ENCODE measurements at regions of chr1 and their contacts with region 1.

Region 1: DNA sequence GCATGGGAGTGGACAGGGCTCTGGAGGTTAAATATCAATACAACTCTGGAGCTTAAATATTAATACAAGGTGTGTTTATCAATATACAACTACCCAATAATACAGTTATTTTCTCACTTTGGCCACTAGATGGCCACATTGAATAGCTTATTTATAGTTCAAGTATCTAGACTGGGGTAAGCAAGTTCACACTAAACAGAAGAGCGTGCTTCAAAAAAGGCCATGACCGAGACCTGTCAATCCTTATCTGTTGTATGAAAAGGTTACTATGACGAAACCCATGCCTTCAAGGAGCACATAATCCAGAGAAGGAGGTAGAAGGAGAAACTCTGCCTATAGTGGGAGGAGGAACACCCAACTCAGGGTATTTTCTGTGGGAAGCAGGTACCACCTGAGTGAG is 29.1 kb downstream of the CHML start:
- DNase-seq: peak; percentile 92
- H3K4me3 Mint-ChIP-seq: no peak overlapping the region
- H3K27ac Mint-ChIP-seq: no peak overlapping the region
- H3K4me1 Mint-ChIP-seq: peaks cover 42% of the 10 kb centered on the region
- H3K27me3 Mint-ChIP-seq: no peaks in the 10 kb centered on the region
- CTCF ChIP-seq: peak; percentile 78

Region 2: DNA sequence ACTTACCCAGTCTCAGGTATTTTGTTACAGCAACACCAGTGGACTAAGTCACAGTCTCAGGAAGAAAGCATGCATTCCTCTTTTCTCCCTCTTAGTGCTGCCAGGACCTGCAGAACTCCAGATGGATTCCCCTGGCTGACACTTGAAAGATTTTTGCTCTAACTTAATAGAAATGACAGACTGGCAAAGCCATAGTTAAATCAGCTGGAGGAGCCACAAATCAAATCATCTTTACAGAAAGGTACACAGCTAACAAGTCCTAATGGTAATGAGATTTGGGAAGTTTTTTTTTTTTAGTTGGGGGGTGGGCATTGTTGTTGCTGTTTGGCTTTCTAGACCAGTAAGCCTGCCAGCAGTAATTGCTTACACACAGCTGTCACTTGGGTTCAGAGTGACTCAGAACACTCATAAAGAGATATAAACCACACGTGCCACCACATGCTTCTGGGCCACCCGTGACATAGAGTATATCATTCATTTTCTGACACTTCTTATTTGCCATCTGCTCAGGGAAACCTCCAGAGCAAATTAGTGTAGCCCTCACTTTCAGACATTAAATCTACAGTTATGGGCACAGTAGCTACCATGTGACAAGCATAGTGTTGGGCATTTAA is 163.9 kb before region 1 on chr1:
- CTCF ChIA-PET with region 1: no interaction called
- POLR2A ChIA-PET with region 1: no interaction called
- intact Hi-C with region 1: no loop called
- DNase-seq: no peak
- H3K4me3 Mint-ChIP-seq: no peak overlapping the region
- H3K27ac Mint-ChIP-seq: no peak overlapping the region
- H3K4me1 Mint-ChIP-seq: peaks cover 8% of the 10 kb centered on the region
- H3K27me3 Mint-ChIP-seq: no peaks in the 10 kb centered on the region
- CTCF ChIP-seq: no peak

Region 3: GRCh38 chr1:241513378-241513777 is 97.7 kb before region 1 on chr1:
- CTCF ChIA-PET with region 1: interaction called, 12 read pairs
- POLR2A ChIA-PET with region 1: interaction called, 53 read pairs
- intact Hi-C with region 1: no loop called
- DNase-seq: no peak
- H3K4me3 Mint-ChIP-seq: no peak overlapping the region
- H3K27ac Mint-ChIP-seq: no peak overlapping the region
- H3K4me1 Mint-ChIP-seq: peaks cover 28% of the 10 kb centered on the region
- H3K27me3 Mint-ChIP-seq: no peaks in the 10 kb centered on the region
- CTCF ChIP-seq: no peak

Region 4: DNA sequence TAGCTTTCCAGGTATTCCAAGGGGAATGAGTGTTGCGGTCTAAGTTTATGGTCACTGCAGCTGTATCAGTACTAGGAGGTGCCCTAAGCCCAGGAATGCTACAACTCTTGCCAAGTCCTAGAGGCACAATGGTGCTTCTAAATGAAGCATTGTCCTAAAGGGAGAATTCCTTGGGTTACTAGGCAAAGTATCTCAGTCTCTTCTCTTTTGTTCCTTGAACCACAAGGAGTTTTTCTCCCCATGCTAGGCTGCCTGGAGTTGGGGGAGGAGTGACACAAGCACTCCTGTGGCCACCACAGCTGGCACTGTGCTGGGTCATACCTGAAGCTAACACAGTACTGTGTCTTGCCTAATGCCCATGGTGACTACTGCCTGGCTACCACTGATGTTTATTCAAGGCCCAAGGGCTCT is 28.1 kb before region 1 on chr1:
- CTCF ChIA-PET with region 1: interaction called, 25 read pairs
- POLR2A ChIA-PET with region 1: interaction called, 30 read pairs
- intact Hi-C with region 1: no loop called
- DNase-seq: peak; percentile 75
- H3K4me3 Mint-ChIP-seq: no peak overlapping the region
- H3K27ac Mint-ChIP-seq: peak overlapping the region; percentile 73
- H3K4me1 Mint-ChIP-seq: peaks cover 8% of the 10 kb centered on the region
- H3K27me3 Mint-ChIP-seq: no peaks in the 10 kb centered on the region
- CTCF ChIP-seq: no peak

Region 5: DNA sequence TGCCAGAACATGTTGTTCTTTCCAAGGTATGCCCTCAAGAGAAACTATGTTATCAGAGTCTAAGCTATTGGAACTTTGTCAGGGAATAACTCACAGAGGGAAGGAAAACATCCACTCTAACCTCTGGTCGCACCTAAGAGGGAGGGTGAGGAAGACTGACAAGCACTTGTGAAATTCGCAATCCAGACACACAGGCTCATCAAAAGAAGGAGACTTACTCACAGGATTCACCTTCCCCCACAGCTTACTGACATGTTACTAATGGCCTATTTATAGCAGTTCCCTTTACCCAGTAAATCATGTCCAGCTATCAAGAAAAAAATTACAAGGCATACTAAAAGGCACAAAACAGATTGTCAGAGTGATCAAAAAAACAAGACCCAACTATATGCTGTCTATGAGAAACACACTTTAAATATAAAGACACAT is 77.9 kb after region 1 on chr1:
- CTCF ChIA-PET with region 1: interaction called, 6 read pairs
- POLR2A ChIA-PET with region 1: interaction called, 19 read pairs
- intact Hi-C with region 1: loop called (anchors 2 kb)
- DNase-seq: peak; percentile 100
- H3K4me3 Mint-ChIP-seq: peak overlapping the region; percentile 6
- H3K27ac Mint-ChIP-seq: peak overlapping the region; percentile 79
- H3K4me1 Mint-ChIP-seq: peaks cover 23% of the 10 kb centered on the region
- H3K27me3 Mint-ChIP-seq: no peaks in the 10 kb centered on the region
- CTCF ChIP-seq: no peak

Region 6: GRCh38 chr1:241825581-241825980 is 214.5 kb after region 1 on chr1:
- CTCF ChIA-PET with region 1: interaction called, 137 read pairs
- POLR2A ChIA-PET with region 1: interaction called, 6 read pairs
- intact Hi-C with region 1: no loop called
- DNase-seq: no peak
- H3K4me3 Mint-ChIP-seq: no peak overlapping the region
- H3K27ac Mint-ChIP-seq: no peak overlapping the region
- H3K4me1 Mint-ChIP-seq: peaks cover 7% of the 10 kb centered on the region
- H3K27me3 Mint-ChIP-seq: no peaks in the 10 kb centered on the region
- CTCF ChIP-seq: no peak

Region 7: DNA sequence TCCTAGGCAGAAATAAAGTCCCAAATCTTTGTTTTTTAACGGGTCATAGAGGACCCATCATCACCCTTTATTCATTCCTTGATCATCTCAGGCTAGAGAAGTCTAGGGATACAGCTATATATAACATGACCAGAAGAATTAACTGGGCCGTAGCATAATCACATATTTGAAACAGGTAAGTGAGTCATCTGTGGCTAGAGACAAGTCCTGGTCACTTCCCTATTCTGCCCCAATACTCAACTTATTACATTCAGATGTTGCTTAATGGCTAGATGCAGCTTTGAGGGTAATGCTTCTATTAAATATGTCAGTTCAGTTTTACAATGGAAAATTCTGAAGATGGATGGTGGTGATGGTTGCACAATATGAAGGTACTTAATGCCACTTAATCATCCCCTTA is 283.9 kb after region 1 on chr1:
- CTCF ChIA-PET with region 1: interaction called, 34 read pairs
- POLR2A ChIA-PET with region 1: no interaction called
- intact Hi-C with region 1: loop called (anchors 2 kb)
- DNase-seq: no peak
- H3K4me3 Mint-ChIP-seq: no peak overlapping the region
- H3K27ac Mint-ChIP-seq: no peak overlapping the region
- H3K4me1 Mint-ChIP-seq: no peaks in the 10 kb centered on the region
- H3K27me3 Mint-ChIP-seq: no peaks in the 10 kb centered on the region
- CTCF ChIP-seq: no peak

Region 8: DNA sequence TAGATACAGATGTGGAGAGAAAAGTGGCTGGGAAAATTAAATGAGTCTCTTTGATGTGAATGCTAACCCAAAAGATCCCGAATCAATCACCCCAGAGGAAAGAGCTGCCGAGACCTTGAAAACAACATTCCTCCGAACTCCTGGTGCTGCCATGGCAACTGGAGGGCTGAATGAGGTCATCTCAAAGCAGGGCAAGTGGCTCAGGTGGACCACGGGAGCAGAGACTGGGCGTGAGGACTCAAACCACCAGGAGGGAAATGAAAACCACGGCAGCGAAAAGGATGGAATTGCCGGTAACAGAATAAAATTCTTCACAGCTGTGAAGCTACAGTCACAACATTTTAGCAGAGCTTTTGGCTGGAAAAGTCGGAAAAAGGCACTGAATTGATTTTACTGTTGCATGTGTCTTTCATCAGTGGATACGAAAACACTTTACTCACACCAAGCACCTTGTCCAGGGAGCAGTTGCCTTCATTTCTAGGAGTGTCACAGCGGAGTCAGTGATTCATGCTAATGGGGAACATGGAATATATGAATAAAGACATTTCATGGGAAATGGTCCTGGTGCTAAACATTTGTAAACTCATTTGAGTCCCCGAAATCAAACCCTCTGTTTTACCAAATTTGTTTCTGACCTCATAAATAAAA is 323.3 kb after region 1 on chr1:
- CTCF ChIA-PET with region 1: no interaction called
- POLR2A ChIA-PET with region 1: no interaction called
- intact Hi-C with region 1: no loop called
- DNase-seq: no peak
- H3K4me3 Mint-ChIP-seq: no peak overlapping the region
- H3K27ac Mint-ChIP-seq: peak overlapping the region; percentile 32
- H3K4me1 Mint-ChIP-seq: peaks cover 6% of the 10 kb centered on the region
- H3K27me3 Mint-ChIP-seq: no peaks in the 10 kb centered on the region
- CTCF ChIP-seq: no peak

Measured in MCF 10A (cell line).